GM18951 (cell line): ENCODE measurements at regions of chrX and their contacts with region 1.

Region 1: GRCh38 chrX:108224727-108225621 is 133.4 kb downstream of the ATG4A start:
- POLR2A ChIP-seq: no peak

Region 2: DNA sequence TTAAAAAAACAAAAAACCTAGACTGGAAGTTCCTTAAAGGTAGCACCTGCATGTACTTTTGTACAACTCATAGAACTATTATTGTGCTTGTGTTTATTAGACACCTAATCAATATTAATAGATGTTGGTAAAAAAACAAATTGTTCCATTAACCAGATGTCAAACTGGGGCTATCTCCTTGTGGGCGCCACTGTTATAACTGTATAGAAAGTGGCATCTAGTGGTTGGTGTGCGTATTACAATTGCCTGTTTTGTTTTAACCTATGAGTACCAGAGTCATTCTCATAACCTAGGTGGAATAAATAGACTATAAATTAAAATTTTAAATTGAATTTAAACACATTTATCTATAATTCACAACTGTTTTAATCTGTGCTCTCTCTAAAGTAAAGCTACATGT is 312.0 kb after region 1 on chrX:
- in situ Hi-C with region 1: loop called (anchors 25 kb)
- POLR2A ChIP-seq: no peak